ENCODE measurements at regions of chr12 and their contacts with region 1.

Region 1: GRCh38 chr12:118164798-118165486 is 29.0 kb downstream of the PEBP1 start:
- DNase-seq: peak in 1 of 2 experiments; percentile 37
- H3K4me3 ChIP-seq: no peak overlapping the region
- H3K4me3 Mint-ChIP-seq: no peak overlapping the region
- H3K27ac Mint-ChIP-seq: no peak overlapping the region
- H3K4me1 ChIP-seq: no peaks in the 10 kb centered on the region
- H3K4me1 Mint-ChIP-seq: no peaks in the 10 kb centered on the region
- H3K27me3 ChIP-seq: no peaks in the 10 kb centered on the region
- H3K27me3 Mint-ChIP-seq: no peaks in the 10 kb centered on the region
- CTCF ChIP-seq: peak; percentile 29 to 57

Region 2: GRCh38 chr12:118120579-118121363 is 44.2 kb before region 1 on chr12:
- CTCF ChIA-PET with region 1: interaction called, 3 read pairs
- POLR2A ChIA-PET with region 1: no interaction called
- intact Hi-C with region 1: loop called (anchors 5 kb)
- DNase-seq: peak; percentile 67 to 68
- H3K4me3 ChIP-seq: no peak overlapping the region
- H3K4me3 Mint-ChIP-seq: no peak overlapping the region
- H3K27ac Mint-ChIP-seq: peak overlapping the region; percentile 69
- H3K4me1 ChIP-seq: peaks cover 14% of the 10 kb centered on the region
- H3K4me1 Mint-ChIP-seq: peaks cover 14% of the 10 kb centered on the region
- H3K27me3 ChIP-seq: no peaks in the 10 kb centered on the region
- H3K27me3 Mint-ChIP-seq: no peaks in the 10 kb centered on the region
- CTCF ChIP-seq: peak; percentile 77 to 78